HCT116 (cell line): ENCODE measurements at regions of chr16 and their contacts with region 1.

Region 1: DNA sequence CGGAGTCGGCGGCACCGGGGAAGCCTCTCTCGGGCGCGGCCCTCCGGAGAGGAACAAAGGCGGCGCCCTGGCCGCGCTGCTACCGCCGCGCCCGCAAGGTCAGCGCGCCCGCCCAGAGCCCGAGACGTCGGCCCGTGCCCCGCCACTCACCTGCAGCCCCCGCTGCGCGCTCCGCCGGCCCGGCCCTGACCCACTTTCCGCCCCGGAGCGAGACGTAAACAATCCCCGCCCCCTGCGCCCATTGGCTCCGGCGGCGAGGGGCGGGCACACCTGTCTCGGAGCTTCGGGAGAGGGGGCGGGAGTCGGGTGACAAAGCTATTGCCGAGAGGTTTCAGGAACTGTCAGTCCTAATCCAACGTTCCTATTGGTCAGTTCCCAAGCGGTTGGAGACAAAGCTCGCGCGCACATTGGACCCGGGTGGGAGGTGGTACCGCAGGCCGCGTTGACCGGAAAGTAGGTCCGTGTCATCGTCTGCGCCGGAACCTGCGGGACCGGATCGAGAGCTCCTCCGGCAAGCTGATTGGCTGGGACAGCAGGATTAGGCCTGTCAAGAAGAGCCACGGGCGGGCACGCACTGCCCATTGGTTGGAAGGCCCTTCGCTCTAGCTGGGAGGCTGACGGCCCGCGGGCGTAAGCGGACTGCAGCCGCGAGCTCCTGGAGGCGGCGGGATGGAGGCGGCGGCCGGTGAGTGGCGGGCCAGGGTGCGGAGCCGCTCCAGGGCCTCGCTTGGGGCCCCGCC is at the starts of genes NUBP2 and SPSB3:
- DNase-seq: peak; percentile 100
- ATAC-seq: peak; percentile 84
- H3K4me3 ChIP-seq: peak within 1 kb of the TSS; percentile 80 to 88
- H3K27ac ChIP-seq: peak within 1 kb of the TSS; percentile 78
- H3K4me1 ChIP-seq: peaks cover 0 to 22% of the 10 kb centered on the region in 2 experiments; a peak in 3 of 4 replicates
- H3K27me3 ChIP-seq: no peaks in the 10 kb centered on the region
- CTCF ChIP-seq: no peak
- POLR2A ChIP-seq: no peak
- RAD21 ChIP-seq: no peak
- total RNA-seq, gene NUBP2: 103 TPM
- total RNA-seq, gene SPSB3: 31.6 TPM

Region 2: DNA sequence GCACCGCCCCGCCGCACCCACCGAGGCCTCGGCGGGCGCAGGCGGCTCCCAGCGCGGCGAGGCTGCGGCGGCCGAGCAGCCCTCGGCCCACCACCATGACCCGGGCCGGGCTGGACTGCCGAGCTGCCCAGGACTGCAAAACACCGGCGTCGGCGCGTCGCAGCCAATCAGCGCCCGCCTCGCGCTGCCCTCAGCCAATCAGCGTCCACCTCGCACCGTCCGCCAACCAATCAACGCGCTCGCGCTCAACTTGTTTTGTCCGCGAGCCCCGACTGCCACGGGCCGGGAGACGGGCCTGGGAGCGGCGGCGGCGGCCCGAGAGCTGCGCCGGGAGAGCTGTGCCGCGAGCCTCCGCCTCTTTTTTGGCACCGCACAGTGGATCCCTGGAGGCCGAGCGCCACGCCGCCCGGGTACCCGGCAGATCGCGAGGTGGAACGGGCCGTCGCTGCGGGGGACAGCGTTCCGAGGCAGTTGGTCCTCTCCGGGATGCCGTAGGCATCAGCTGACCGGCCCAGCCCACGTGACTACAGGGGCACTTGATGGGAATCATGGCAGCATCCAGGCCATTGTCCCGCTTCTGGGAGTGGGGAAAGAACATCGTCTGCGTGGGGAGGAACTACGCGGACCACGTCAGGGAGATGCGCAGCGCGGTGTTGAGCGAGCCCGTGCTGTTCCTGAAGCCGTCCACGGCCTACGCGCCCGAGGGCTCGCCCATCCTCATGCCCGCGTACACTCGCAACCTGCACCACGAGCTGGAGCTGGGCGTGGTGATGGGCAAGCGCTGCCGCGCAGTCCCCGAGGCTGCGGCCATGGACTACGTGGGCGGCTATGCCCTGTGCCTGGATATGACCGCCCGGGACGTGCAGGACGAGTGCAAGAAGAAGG is 44.4 kb after region 1 on chr16 and contains the starts of genes FAHD1 and HAGH:
- CTCF ChIA-PET with region 1: interaction called, 3 read pairs
- POLR2A ChIA-PET with region 1: interaction called, 6 read pairs
- RAD21 ChIA-PET with region 1: no interaction called
- intact Hi-C with region 1: loop called (anchors 2 kb)
- DNase-seq: peak; percentile 89
- ATAC-seq: peak; percentile 86
- H3K4me3 ChIP-seq: peak within 1 kb of the TSS; percentile 90 to 98
- H3K27ac ChIP-seq: peak within 1 kb of the TSS; percentile 80
- H3K4me1 ChIP-seq: peaks cover 14 to 17% of the 10 kb centered on the region in 2 experiments
- H3K27me3 ChIP-seq: no peaks in the 10 kb centered on the region
- CTCF ChIP-seq: no peak
- POLR2A ChIP-seq: peak; percentile 24
- RAD21 ChIP-seq: no peak
- total RNA-seq, gene FAHD1: 25.8 TPM
- total RNA-seq, gene HAGH: 39.1 TPM